CD14-positive monocyte (primary cell): ENCODE measurements at regions of chr11 and their contacts with region 1.

Region 1: GRCh38 chr11:117002639-117003299 is 95.5 kb downstream of the SIK3 start:
- DNase-seq: no peak
- H3K4me3 ChIP-seq: no peak overlapping the region
- H3K4me3 Mint-ChIP-seq: no peak overlapping the region
- H3K27ac ChIP-seq: peak overlapping the region in 1 of 2 donors; percentile 87
- H3K27ac Mint-ChIP-seq: peak overlapping the region; percentile 91 to 99 (median 94)
- H3K4me1 ChIP-seq: peaks cover 74 to 92% of the 10 kb centered on the region in 2 donors
- H3K4me1 Mint-ChIP-seq: peaks cover 84% of the 10 kb centered on the region
- H3K27me3 ChIP-seq: no peaks in the 10 kb centered on the region
- H3K27me3 Mint-ChIP-seq: no peaks in the 10 kb centered on the region
- CTCF ChIP-seq: no peak

Region 2: DNA sequence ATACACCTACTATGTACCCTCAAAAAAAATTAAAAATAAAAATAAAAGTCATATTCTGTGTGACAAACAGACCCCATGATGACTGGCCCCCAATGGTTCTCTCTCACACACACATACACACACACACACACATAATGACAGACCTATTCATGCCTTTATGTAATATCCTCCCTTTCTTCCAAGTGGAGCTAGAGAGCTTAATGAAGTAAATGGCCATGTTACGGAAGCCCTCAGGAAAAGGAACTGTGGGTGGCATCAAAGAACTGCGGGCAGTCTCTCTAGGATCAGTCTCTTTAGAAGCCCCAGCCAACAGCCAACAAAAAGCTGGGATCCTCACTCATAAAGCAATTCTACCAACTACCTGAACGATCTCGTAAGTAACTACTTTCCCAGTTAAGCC is 30.1 kb before region 1 on chr11:
- intact Hi-C with region 1: loop called in 1 of 2 experiments (anchors 5 kb)
- DNase-seq: peak; percentile 60 to 68 (median 65)
- H3K4me3 ChIP-seq: peak overlapping the region in 1 of 3 experiments; percentile 11
- H3K4me3 Mint-ChIP-seq: peak overlapping the region in 1 of 2 donors; percentile 56
- H3K27ac ChIP-seq: peak overlapping the region; percentile 40 to 72
- H3K27ac Mint-ChIP-seq: peak overlapping the region; percentile 71 to 91 (median 86)
- H3K4me1 ChIP-seq: peaks cover 25 to 43% of the 10 kb centered on the region in 2 donors
- H3K4me1 Mint-ChIP-seq: peaks cover 38% of the 10 kb centered on the region
- H3K27me3 ChIP-seq: no peaks in the 10 kb centered on the region
- H3K27me3 Mint-ChIP-seq: no peaks in the 10 kb centered on the region
- CTCF ChIP-seq: peak; percentile 33

Region 3: DNA sequence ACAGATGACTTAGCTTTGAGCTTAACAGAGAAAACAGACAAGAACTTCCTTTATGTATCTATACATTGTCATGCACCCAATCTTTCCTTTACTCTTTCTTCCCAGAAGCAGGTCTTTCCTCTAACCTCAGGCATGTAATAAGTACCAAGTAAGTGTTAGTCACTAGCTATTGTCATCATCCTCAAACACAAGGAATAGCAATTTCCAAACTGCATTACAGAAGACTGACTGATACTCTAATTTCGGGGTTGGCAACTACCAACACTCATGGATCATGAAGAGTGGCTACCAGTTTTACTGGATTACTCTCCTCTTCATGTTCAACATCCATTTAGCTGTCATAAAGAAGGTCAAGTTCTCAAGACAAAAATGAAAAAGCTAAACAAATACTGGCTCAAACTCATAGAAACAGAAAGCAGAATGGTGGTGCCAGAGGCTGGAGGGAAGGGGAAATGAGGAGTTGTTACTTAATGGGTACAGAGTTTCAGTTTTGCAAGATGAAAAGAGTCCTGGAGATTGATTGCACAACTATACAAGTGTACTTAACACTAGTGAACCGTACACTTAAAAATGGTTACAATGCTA is 16.2 kb before region 1 on chr11:
- intact Hi-C with region 1: loop called in 1 of 2 experiments (anchors 2 kb)
- DNase-seq: peak; percentile 71 to 91 (median 88)
- H3K4me3 ChIP-seq: peak overlapping the region; percentile 13 to 64 (median 51)
- H3K4me3 Mint-ChIP-seq: peak overlapping the region; percentile 52 to 82
- H3K27ac ChIP-seq: peak overlapping the region; percentile 77 to 90
- H3K27ac Mint-ChIP-seq: peak overlapping the region; percentile 92 to 98 (median 95)
- H3K4me1 ChIP-seq: peaks cover 92 to 98% of the 10 kb centered on the region in 2 donors
- H3K4me1 Mint-ChIP-seq: peaks cover 85% of the 10 kb centered on the region
- H3K27me3 ChIP-seq: no peaks in the 10 kb centered on the region
- H3K27me3 Mint-ChIP-seq: peaks cover 0 to 2% (median 0%) of the 10 kb centered on the region in 3 donors
- CTCF ChIP-seq: no peak

Region 4: GRCh38 chr11:117098269-117099232 is 95.8 kb after region 1 on chr11 and contains the start of gene SIK3:
- intact Hi-C with region 1: loop called in 1 of 2 experiments (anchors 5 kb)
- DNase-seq: peak; percentile 92 to 95 (median 93)
- H3K4me3 ChIP-seq: peak within 1 kb of the TSS; percentile 85 to 97 (median 89)
- H3K4me3 Mint-ChIP-seq: peak within 1 kb of the TSS; percentile 99 to 100
- H3K27ac ChIP-seq: peak within 1 kb of the TSS; percentile 82 to 97
- H3K27ac Mint-ChIP-seq: peak within 1 kb of the TSS; percentile 98 to 100 (median 99)
- H3K4me1 ChIP-seq: peaks cover 38 to 40% of the 10 kb centered on the region in 2 donors
- H3K4me1 Mint-ChIP-seq: peaks cover 45% of the 10 kb centered on the region
- H3K27me3 ChIP-seq: no peaks in the 10 kb centered on the region
- H3K27me3 Mint-ChIP-seq: no peaks in the 10 kb centered on the region
- CTCF ChIP-seq: peak; percentile 45
- polyA plus RNA-seq, gene SIK3: 18.3 to 142 (median 20.0) TPM